Activated CD8-positive, alpha-beta T cell treated with anti-CD3 and anti-CD28 coated beads, Interleukin-2, amount 10 ng/mL, durations not matched to agents 7 days and 5 days (primary cell): ENCODE measurements at regions of chr2 and their contacts with region 1.

Region 1: DNA sequence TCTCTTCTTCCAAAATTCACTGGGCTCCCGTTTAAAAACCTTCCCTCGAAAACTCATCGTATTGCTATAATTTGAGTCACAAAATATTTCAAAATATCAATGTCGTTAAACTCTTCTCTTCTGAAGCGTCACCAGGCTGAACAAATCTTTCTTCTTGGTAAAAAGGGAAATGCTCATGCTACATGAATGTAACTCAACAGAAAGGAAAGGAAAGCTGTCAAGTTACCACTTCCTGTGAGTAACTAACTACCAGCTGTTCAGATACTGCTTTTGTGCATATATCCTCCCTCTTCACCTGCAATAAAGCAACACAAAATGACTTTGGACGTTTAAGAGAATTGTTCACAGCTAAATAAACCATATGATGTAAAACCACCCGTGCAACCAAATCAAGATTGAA is 95.4 kb downstream of the DOCK10 start:
- DNase-seq: no peak
- ATAC-seq: peak; percentile 50
- H3K4me3 Mint-ChIP-seq: peak overlapping the region; percentile 95
- H3K27ac Mint-ChIP-seq: peak overlapping the region; percentile 93
- H3K4me1 Mint-ChIP-seq: peaks cover 60% of the 10 kb centered on the region
- H3K27me3 Mint-ChIP-seq: no peaks in the 10 kb centered on the region

Region 2: GRCh38 chr2:224922142-224922727 is 24.7 kb before region 1 on chr2:
- CTCF ChIA-PET with region 1: interaction called, 137 read pairs
- POLR2A ChIA-PET with region 1: interaction called, 221 read pairs
- DNase-seq: no peak
- ATAC-seq: peak; percentile 27
- H3K4me3 Mint-ChIP-seq: peak overlapping the region; percentile 41
- H3K27ac Mint-ChIP-seq: peak overlapping the region; percentile 78
- H3K4me1 Mint-ChIP-seq: peaks cover 58% of the 10 kb centered on the region
- H3K27me3 Mint-ChIP-seq: no peaks in the 10 kb centered on the region

Region 3: DNA sequence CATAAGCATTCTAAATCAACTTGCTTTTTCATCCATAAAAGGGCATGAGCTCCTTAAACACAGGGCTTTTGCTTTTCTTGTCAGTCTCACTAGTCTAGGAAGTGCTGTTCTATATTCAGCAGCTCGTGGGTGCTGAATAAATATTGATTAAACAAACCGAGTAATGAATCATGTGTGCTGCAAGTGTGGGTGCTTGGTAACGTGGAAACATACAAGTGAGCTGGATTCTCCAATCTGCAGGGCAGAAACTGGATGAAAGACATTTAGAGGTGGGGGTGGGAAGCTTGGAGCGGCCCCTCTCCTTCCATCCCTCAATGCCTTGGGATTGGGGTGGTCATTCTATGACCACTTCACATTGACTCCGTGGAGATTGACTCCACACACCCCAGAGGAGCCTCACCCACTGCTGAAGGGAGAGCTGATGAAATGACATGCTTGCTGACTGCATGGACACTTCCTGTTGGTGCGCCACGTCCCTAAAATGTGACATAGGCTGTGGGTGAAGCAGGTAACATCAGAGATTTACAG is 19.2 kb before region 1 on chr2:
- CTCF ChIA-PET with region 1: interaction called, 137 read pairs
- POLR2A ChIA-PET with region 1: interaction called, 221 read pairs
- DNase-seq: peak; percentile 91
- ATAC-seq: peak; percentile 75
- H3K4me3 Mint-ChIP-seq: peak overlapping the region; percentile 64
- H3K27ac Mint-ChIP-seq: peak overlapping the region; percentile 100
- H3K4me1 Mint-ChIP-seq: peaks cover 99% of the 10 kb centered on the region
- H3K27me3 Mint-ChIP-seq: no peaks in the 10 kb centered on the region

Region 4: DNA sequence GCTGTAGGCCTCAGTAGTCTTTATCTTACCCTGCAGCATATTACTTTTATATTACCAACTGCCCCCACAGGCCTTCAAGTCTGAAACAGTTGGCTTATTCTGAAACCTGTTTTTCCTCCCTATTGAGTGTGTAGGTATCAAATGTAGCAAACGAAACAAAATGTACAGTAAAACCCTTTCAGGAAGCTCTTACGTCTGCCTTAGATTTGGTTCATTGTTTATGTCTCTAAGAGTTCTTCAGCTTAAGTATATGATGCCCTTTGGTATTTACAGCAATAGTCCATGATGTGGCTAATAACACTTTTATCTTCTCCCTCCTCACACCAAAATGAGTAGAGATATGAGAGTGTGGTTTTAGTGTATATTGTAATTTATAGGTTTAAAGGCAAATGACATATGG is 13.5 kb before region 1 on chr2:
- CTCF ChIA-PET with region 1: interaction called, 137 read pairs
- POLR2A ChIA-PET with region 1: interaction called, 221 read pairs
- DNase-seq: no peak
- ATAC-seq: peak; percentile 31
- H3K4me3 Mint-ChIP-seq: peak overlapping the region; percentile 26
- H3K27ac Mint-ChIP-seq: peak overlapping the region; percentile 76
- H3K4me1 Mint-ChIP-seq: peaks cover 94% of the 10 kb centered on the region
- H3K27me3 Mint-ChIP-seq: no peaks in the 10 kb centered on the region

Region 5: GRCh38 chr2:225041851-225042799 is 95.2 kb after region 1 on chr2 and contains the start of gene DOCK10:
- CTCF ChIA-PET with region 1: no interaction called
- POLR2A ChIA-PET with region 1: interaction called, 26 read pairs
- DNase-seq: peak; percentile 60
- ATAC-seq: peak; percentile 48
- H3K4me3 Mint-ChIP-seq: peak within 1 kb of the TSS; percentile 98
- H3K27ac Mint-ChIP-seq: peak within 1 kb of the TSS; percentile 98
- H3K4me1 Mint-ChIP-seq: peaks cover 50% of the 10 kb centered on the region
- H3K27me3 Mint-ChIP-seq: peaks cover 15% of the 10 kb centered on the region
- total RNA-seq, gene DOCK10: 343 to 344 TPM

Region 6: GRCh38 chr2:225052703-225053102 is 105.8 kb after region 1 on chr2:
- CTCF ChIA-PET with region 1: interaction called, 3 read pairs
- POLR2A ChIA-PET with region 1: interaction called, 11 read pairs
- DNase-seq: peak; percentile 74
- ATAC-seq: peak; percentile 91
- H3K4me3 Mint-ChIP-seq: peak overlapping the region; percentile 48
- H3K27ac Mint-ChIP-seq: peak overlapping the region; percentile 85
- H3K4me1 Mint-ChIP-seq: peaks cover 71% of the 10 kb centered on the region
- H3K27me3 Mint-ChIP-seq: no peaks in the 10 kb centered on the region